B cell (primary cell): ENCODE measurements at regions of chr1 and their contacts with region 1.

Region 1: GRCh38 chr1:202926720-202927491 is at the start of gene KLHL12:
- DNase-seq: peak; percentile 97
- ATAC-seq: peak; percentile 94
- H3K4me3 ChIP-seq: peak within 1 kb of the TSS; percentile 92 to 99 (median 94)
- H3K4me3 Mint-ChIP-seq: peak within 1 kb of the TSS; percentile 94
- H3K27ac ChIP-seq: peak within 1 kb of the TSS; percentile 89 to 95
- H3K27ac Mint-ChIP-seq: peak within 1 kb of the TSS; percentile 97
- H3K4me1 ChIP-seq: peaks cover 9 to 14% of the 10 kb centered on the region in 2 donors
- H3K4me1 Mint-ChIP-seq: peaks cover 21% of the 10 kb centered on the region
- H3K27me3 ChIP-seq: no peaks in the 10 kb centered on the region
- H3K27me3 Mint-ChIP-seq: no peaks in the 10 kb centered on the region
- CTCF ChIP-seq: peak; percentile 81
- total RNA-seq, gene KLHL12: 25.5 and 26.1 TPM in 2 replicates

Region 2: DNA sequence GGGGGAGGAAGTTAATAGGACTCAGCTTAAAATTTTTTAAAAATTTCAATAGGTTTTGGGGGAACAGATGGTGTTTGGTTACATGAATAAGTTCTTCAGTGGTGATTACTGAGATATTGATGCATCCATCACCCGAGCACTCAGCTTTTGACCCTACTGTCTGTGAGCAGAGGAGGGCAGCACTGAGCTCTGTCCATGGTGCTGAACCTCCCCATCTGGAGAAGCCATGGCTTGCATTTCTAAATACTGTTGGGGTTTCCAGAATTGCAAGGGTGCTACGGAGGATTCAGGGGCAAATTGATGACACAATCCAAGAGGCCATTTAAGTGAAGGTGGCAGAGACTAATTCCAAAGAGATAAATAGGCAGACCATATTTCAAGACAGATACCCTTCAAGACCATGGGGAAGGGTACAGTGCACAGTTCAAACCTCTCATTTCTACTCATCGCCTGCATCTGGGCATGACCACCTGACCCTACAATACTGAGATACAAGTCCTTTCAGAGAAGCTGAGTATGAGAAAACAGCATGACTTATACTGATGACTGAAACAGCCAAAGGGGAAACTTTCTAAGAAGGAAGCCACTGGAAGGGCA is 233.8 kb before region 1 on chr1:
- CTCF ChIA-PET with region 1: no interaction called
- POLR2A ChIA-PET with region 1: no interaction called
- intact Hi-C with region 1: no loop called
- DNase-seq: peak; percentile 71
- ATAC-seq: peak; percentile 61
- H3K4me3 ChIP-seq: no peak overlapping the region
- H3K4me3 Mint-ChIP-seq: no peak overlapping the region
- H3K27ac ChIP-seq: no peak overlapping the region
- H3K27ac Mint-ChIP-seq: peak overlapping the region; percentile 29
- H3K4me1 ChIP-seq: no peaks in the 10 kb centered on the region
- H3K4me1 Mint-ChIP-seq: no peaks in the 10 kb centered on the region
- H3K27me3 ChIP-seq: peaks cover 0 to 56% (median 8%) of the 10 kb centered on the region in 4 experiments
- H3K27me3 Mint-ChIP-seq: peaks cover 70% of the 10 kb centered on the region
- CTCF ChIP-seq: peak; percentile 18

Region 3: DNA sequence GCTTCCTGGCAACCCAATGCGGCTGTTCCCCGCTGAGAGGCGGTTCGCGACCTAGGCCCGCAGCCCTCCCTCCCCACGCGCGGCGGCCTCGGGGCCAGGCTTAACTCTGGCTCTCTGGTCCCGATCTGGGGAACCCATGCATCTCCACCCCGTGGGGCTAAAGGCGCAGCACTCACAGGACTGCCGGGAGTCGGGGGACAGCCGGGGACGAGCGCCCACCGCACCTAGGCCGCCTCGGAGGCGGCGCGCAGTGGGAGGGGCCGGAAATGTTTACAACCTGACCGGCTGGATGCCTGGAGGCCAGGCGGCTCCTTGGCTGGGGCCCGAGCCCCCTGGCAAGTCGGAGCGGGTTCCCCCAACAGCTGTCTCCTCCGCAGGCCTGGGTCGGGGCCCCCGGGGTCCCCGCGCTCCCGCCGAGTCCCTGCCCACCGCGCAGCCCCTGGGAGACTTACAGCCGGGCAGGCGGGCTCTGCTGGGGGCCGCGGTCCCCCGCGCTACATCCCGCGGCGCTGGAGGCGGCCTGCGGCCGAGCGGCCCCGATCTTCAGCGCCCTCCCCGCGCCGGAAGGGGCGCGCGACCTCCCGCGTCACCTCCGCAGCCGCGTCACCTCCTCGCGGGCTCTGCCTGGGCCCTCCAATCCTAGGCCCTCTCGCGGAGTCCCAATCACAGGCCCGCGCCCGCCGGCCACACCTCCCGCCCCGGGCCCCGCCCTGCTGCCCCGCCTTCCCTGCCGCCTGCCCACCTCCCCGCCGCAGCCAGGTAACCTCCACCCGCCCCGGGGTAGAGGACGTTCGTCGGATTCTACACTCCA is 31.0 kb after region 1 on chr1 and contains the start of gene ADIPOR1:
- CTCF ChIA-PET with region 1: no interaction called
- POLR2A ChIA-PET with region 1: no interaction called
- intact Hi-C with region 1: loop called (anchors 1 kb)
- DNase-seq: peak; percentile 92
- ATAC-seq: peak; percentile 98
- H3K4me3 ChIP-seq: peak within 1 kb of the TSS; percentile 79 to 93 (median 87)
- H3K4me3 Mint-ChIP-seq: peak within 1 kb of the TSS; percentile 90
- H3K27ac ChIP-seq: peak within 1 kb of the TSS; percentile 79 to 95
- H3K27ac Mint-ChIP-seq: peak within 1 kb of the TSS; percentile 86
- H3K4me1 ChIP-seq: peaks cover 25 to 27% of the 10 kb centered on the region in 2 donors
- H3K4me1 Mint-ChIP-seq: peaks cover 40% of the 10 kb centered on the region
- H3K27me3 ChIP-seq: no peaks in the 10 kb centered on the region
- H3K27me3 Mint-ChIP-seq: no peaks in the 10 kb centered on the region
- CTCF ChIP-seq: no peak
- total RNA-seq, gene ADIPOR1: 44.2 and 46.6 TPM in 2 replicates